ENCODE measurements at regions of chr5 and their contacts with region 1.

Region 1: DNA sequence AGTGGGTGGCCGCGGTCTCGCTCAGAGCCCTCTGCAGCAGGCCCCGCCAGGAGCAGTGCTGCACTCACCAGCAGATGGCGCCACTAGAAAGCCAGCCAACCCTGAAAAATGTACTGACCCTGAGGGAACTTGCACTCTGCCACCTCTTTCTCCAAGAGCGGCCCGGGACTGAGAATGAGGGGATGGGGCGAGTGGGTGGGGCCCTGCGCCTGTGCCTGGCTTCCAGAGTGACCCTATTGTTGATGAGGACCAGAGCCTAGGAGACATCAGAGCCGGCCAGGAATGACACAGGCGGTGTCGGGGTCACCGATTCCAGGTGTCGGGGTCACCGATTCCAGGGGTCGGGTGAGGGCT is 2.9 kb upstream of the IL17B start:
- DNase-seq: peak in 9 of 10 donors; percentile 32 to 94 (median 64)

Region 2: GRCh38 chr5:149298842-149299404 is 83.0 kb before region 1 on chr5:
- intact Hi-C with region 1: no loop called
- DNase-seq: no peak

Region 3: GRCh38 chr5:149434162-149435014 is 52.4 kb after region 1 on chr5:
- intact Hi-C with region 1: loop called (anchors 2 kb)
- DNase-seq: peak in 5 of 10 donors; percentile 49 to 64 (median 59)

Region 4: GRCh38 chr5:149455889-149456409 is 74.0 kb after region 1 on chr5:
- intact Hi-C with region 1: no loop called
- DNase-seq: peak in 1 of 10 donors; percentile 62

Region 5: GRCh38 chr5:149567226-149567625 is 185.3 kb after region 1 on chr5:
- intact Hi-C with region 1: loop called (anchors 5 kb)
- DNase-seq: no peak

Measured in posterior cingulate gyrus (tissue), 11 donors.